MCF 10A (cell line): ENCODE measurements at regions of chr6 and their contacts with region 1.

Region 1: DNA sequence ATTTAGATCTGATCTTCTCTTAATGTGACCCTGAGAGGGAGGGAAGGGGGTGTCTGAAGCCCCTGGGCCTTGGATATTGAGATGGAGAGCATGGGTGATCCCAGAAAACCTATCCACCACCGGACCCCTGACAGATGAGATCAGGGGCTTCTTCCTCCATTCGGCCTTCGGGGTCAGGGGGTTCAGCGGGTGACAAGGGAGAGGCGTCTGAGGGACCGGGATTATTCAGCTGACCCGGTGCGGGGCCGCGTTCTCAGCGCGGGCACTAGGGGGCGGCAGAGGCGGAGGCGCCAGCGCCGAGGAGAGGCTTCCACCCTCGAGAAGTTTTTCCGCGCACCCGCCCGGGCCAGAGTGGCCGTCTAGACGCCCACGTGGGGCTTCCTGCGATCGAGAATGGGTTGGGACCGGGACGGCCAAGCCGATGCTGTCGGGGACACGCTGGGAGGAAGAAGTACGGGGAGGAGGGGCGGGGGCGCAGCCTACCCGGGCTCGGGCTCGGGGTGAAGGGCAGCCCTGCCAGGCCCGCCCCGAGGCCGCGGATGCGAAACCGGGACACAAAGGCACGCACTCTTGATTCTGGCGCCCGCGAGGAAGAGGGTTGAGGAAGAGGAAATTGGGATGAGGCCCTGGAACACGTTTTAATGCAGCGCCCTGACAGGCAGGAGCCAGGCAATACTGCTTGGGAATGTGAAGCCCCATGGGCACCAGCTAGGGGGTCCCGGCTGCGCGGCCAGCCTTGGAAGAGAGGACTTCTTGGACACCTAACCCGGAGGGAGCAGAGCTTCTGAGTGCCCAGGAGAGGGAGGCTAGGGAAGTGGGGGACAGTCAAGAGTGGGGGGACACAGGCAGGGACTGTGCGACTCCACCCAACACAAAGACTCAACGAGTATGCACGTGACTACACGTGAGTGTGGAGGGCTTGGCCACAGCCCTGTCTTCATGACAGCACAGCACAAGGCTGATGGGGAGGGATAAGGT is 30.6 kb downstream of the COL11A2 start:
- DNase-seq: peak; percentile 62
- H3K4me3 Mint-ChIP-seq: peak overlapping the region; percentile 85
- H3K27ac Mint-ChIP-seq: peak overlapping the region; percentile 88
- H3K4me1 Mint-ChIP-seq: peaks cover 12% of the 10 kb centered on the region
- H3K27me3 Mint-ChIP-seq: peaks cover 12% of the 10 kb centered on the region
- CTCF ChIP-seq: peak; percentile 93

Region 2: DNA sequence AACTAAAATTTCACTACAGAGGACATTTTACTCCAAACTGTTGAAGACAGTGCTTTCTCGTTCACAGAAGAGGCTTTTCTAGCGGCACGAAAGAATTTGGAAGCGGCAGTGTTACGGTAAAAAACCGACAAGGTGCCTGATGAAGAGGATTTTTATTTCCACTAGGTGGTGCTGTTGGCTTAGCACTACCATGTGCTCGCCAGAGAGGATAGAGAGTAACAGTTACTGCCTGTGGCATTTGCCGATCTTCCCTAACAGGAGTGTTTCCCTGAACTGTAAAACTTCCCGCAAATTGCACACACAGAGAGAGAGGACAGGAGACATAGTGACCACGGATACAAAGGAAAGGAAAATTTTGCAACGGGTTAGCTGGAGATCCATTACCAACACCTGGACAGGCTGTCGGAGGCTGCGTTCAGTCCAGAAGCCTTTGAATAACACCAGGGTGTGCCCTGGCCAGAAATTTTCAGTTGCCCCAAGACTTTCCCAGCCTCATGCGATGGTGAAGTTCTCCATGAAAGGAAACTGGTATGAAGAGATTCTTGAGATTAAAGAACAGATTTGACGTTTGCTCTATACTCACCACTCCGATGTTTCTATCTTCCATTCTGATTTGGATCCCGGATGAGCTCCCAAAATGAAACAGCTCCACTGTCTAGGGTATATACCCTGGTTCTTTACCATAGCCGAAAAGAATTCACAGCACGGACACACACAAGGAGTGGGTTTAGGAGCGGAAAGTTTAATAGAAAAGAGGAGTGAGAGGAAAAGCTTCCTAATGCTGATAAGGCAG is 37.7 kb before region 1 on chr6:
- CTCF ChIA-PET with region 1: interaction called, 7 read pairs
- POLR2A ChIA-PET with region 1: no interaction called
- intact Hi-C with region 1: loop called (anchors 5 kb)
- DNase-seq: peak; percentile 70
- H3K4me3 Mint-ChIP-seq: no peak overlapping the region
- H3K27ac Mint-ChIP-seq: no peak overlapping the region
- H3K4me1 Mint-ChIP-seq: no peaks in the 10 kb centered on the region
- H3K27me3 Mint-ChIP-seq: peaks cover 71% of the 10 kb centered on the region
- CTCF ChIP-seq: peak; percentile 41